ENCODE measurements at regions of chr22 and their contacts with region 1.

Region 1: DNA sequence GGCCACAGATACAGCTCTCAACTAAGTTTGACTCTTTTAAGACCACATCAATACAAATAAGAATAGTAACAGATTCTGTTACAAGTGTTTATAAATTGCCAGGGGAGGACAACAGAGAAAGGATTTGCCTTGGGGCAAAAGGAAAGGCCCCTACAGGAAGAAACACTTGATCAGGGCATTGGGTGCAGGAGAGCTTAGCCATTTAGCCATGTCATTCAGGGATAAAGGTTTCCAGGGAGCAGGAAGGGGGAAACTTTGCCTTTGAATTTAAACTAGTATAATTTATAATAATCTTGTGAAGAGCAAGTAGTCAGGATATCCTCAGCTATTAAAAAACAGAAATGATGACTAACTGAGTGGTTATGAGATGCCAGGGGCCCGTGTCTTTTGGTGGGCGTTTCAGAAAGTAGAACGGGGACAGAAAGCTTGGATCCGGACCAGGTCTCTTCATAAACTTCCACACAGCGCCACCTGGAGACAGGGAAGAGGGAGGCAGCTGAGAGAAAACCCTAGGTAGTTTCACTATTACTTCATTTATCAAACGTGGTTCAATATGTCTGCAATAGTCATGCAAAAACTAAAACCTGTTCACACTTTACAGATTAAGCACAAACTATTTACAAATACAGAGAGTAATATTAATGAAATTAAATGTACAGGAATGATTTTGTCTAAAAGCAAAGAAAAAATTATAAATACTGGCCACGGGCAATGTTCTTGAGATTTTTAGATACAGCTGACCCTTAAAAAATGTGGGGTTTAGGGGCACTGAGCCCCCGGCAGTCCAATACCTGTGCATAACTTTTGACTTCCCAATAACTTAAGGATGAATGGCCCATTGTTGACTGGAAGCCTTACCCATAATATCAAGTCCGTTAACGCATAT is 11.0 kb upstream of the SLC5A4 start:
- DNase-seq: peak; percentile 82
- H3K4me3 Mint-ChIP-seq: peak overlapping the region; percentile 41
- H3K27ac Mint-ChIP-seq: no peak overlapping the region
- H3K4me1 Mint-ChIP-seq: peaks cover 8% of the 10 kb centered on the region
- H3K27me3 Mint-ChIP-seq: peaks cover 6% of the 10 kb centered on the region
- CTCF ChIP-seq: peak; percentile 90

Region 2: GRCh38 chr22:32202539-32203180 is 63.5 kb before region 1 on chr22:
- CTCF ChIA-PET with region 1: interaction called, 26 read pairs
- POLR2A ChIA-PET with region 1: no interaction called
- intact Hi-C with region 1: loop called (anchors 1 kb)
- DNase-seq: peak; percentile 64
- H3K4me3 Mint-ChIP-seq: no peak overlapping the region
- H3K27ac Mint-ChIP-seq: no peak overlapping the region
- H3K4me1 Mint-ChIP-seq: peaks cover 6% of the 10 kb centered on the region
- H3K27me3 Mint-ChIP-seq: peaks cover 17% of the 10 kb centered on the region
- CTCF ChIP-seq: peak; percentile 61

Region 3: DNA sequence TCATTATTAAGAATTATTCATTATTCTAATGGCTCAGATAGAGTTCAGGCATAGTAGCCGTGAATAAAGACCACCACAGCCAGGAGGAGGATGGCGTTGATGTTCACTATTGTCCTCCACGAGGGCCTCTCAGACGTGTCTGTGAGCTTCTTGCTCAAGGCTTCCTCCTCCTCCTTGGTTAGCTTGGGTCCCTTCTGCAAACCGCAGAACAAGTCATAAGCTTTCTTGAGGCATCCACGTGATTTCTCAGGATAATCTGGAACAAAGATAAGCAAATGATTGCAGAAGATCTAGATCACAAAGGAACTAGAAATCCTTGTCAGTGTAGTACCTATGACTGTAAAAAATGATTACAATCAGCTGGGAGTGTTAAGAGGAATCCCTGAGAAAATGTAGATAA is 47.7 kb before region 1 on chr22:
- CTCF ChIA-PET with region 1: interaction called, 11 read pairs
- POLR2A ChIA-PET with region 1: no interaction called
- intact Hi-C with region 1: no loop called
- DNase-seq: no peak
- H3K4me3 Mint-ChIP-seq: no peak overlapping the region
- H3K27ac Mint-ChIP-seq: no peak overlapping the region
- H3K4me1 Mint-ChIP-seq: peaks cover 6% of the 10 kb centered on the region
- H3K27me3 Mint-ChIP-seq: peaks cover 36% of the 10 kb centered on the region
- CTCF ChIP-seq: no peak

Region 4: DNA sequence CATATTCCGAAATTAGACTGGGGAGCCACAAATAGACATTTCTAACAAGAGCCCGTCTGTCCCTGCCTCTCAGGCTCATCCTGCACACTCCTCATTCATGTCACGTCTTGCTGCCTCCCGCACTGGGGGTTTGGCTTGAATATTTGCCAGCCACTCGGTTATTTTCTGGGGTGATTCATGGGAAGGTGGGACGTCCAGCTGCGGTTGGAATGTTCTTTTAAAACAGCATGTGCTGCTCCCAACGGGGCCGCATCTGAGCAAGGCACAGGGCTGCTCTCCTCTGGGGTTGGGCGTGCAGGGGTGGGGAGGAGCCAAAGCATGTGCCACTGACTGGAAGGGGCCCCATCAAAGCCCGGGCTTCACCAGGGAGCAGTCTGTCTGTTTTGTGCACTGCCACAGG is 14.9 kb after region 1 on chr22:
- CTCF ChIA-PET with region 1: interaction called, 18 read pairs
- POLR2A ChIA-PET with region 1: interaction called, 3 read pairs
- intact Hi-C with region 1: no loop called
- DNase-seq: peak; percentile 88
- H3K4me3 Mint-ChIP-seq: peak overlapping the region; percentile 48
- H3K27ac Mint-ChIP-seq: no peak overlapping the region
- H3K4me1 Mint-ChIP-seq: peaks cover 24% of the 10 kb centered on the region
- H3K27me3 Mint-ChIP-seq: no peaks in the 10 kb centered on the region
- CTCF ChIP-seq: no peak

Region 5: GRCh38 chr22:32474635-32475467 is 208.7 kb after region 1 on chr22 and contains the start of gene FBXO7:
- CTCF ChIA-PET with region 1: interaction called, 10 read pairs
- POLR2A ChIA-PET with region 1: no interaction called
- intact Hi-C with region 1: loop called (anchors 10 kb)
- DNase-seq: peak; percentile 89
- H3K4me3 Mint-ChIP-seq: peak within 1 kb of the TSS; percentile 98
- H3K27ac Mint-ChIP-seq: peak within 1 kb of the TSS; percentile 96
- H3K4me1 Mint-ChIP-seq: peaks cover 12% of the 10 kb centered on the region
- H3K27me3 Mint-ChIP-seq: no peaks in the 10 kb centered on the region
- CTCF ChIP-seq: peak; percentile 13
- total RNA-seq, gene FBXO7: 59.8 and 76.9 TPM in 2 replicates

Measured in MCF 10A (cell line).